PC-9 (cell line): ENCODE measurements at regions of chr19 and their contacts with region 1.

Region 1: GRCh38 chr19:32373585-32374295 is 28.3 kb downstream of the ZNF507 start:
- DNase-seq: peak; percentile 80 to 99
- H3K4me3 ChIP-seq: peak overlapping the region; percentile 12; the same call in 1 of the 2 replicates
- H3K27ac ChIP-seq: peak overlapping the region; percentile 79
- H3K4me1 ChIP-seq: peaks cover 39% of the 10 kb centered on the region
- H3K27me3 ChIP-seq: no peaks in the 10 kb centered on the region
- CTCF ChIP-seq: no peak

Region 2: GRCh38 chr19:32333227-32333626 is 40.5 kb before region 1 on chr19:
- CTCF ChIA-PET with region 1: no interaction called
- POLR2A ChIA-PET with region 1: no interaction called
- intact Hi-C with region 1: no loop called
- DNase-seq: no peak
- H3K4me3 ChIP-seq: no peak overlapping the region
- H3K27ac ChIP-seq: no peak overlapping the region
- H3K4me1 ChIP-seq: no peaks in the 10 kb centered on the region
- H3K27me3 ChIP-seq: peaks cover 16% of the 10 kb centered on the region
- CTCF ChIP-seq: no peak

Region 3: GRCh38 chr19:32345261-32346207 is 28.2 kb before region 1 on chr19 and contains the start of gene ZNF507:
- CTCF ChIA-PET with region 1: no interaction called
- POLR2A ChIA-PET with region 1: interaction called, 12 read pairs
- intact Hi-C with region 1: loop called (anchors 1 kb)
- DNase-seq: peak; percentile 49 to 81
- H3K4me3 ChIP-seq: peak within 1 kb of the TSS; percentile 98
- H3K27ac ChIP-seq: peak within 1 kb of the TSS; percentile 65
- H3K4me1 ChIP-seq: peaks cover 56% of the 10 kb centered on the region
- H3K27me3 ChIP-seq: no peaks in the 10 kb centered on the region
- CTCF ChIP-seq: no peak
- total RNA-seq, gene ZNF507: 20.8 and 26.5 TPM in 2 replicates

Region 4: DNA sequence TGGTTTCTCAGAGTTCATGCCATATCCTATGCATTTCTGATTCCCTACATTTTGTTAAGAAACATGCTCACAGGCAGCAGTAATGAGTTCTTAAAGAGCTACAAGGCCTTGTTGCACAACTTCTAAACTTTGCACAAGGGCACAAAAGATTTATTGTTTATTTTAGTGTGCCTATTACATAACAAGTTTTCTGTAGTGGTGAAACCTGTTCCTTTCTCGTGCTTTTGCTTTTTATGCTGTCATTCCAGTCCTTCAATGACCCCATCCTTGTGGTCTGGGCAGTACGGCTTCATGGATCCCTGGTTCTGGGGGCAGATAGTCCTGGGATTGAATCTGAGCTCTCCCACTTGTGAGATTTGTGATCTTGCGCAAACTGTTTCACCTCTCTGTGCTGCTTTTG is 10.5 kb before region 1 on chr19:
- CTCF ChIA-PET with region 1: no interaction called
- POLR2A ChIA-PET with region 1: no interaction called
- intact Hi-C with region 1: loop called (anchors 1 kb)
- DNase-seq: peak; percentile 34 to 91
- H3K4me3 ChIP-seq: no peak overlapping the region
- H3K27ac ChIP-seq: peak overlapping the region; percentile 27
- H3K4me1 ChIP-seq: peaks cover 28% of the 10 kb centered on the region
- H3K27me3 ChIP-seq: no peaks in the 10 kb centered on the region
- CTCF ChIP-seq: no peak

Region 5: DNA sequence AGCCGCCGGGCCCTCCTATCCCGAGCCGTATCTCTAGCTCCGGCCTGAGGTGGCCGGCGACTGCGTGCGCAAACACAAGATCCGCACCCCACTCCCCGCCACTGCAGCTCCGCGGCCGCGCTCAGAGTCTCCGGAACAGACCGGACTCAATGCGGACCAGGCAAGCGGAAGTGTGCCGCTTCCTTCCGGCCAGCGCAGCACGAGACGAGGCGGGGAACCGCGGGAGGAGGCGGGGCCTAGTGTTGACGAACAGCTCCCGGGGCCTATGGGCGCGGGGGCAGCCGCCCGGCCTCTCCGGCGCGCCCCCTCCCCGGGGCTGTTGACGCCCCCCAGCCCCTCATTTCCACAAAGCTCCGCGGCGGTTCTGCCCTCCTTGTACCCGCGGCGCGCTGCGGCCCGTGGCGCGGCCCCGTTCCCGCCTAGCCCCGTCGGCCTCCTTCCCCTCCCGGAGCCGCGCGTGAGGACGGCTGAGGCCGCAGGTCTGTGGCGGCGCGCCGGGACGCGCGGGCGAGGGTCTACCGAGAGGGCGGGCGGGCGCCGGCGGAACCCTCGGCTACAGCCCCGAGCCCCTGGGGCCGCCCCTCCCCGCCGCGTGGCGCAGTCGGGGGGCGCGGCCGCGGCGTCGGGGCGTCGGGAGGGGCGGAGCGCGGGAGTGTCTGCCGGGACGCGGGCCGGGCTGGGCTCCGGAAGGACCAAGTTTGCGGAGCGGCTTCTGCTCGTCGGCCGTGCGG is 31.9 kb after region 1 on chr19 and contains the start of gene DPY19L3:
- CTCF ChIA-PET with region 1: no interaction called
- POLR2A ChIA-PET with region 1: interaction called, 17 read pairs
- intact Hi-C with region 1: loop called (anchors 2 kb)
- DNase-seq: peak; percentile 79 to 94
- H3K4me3 ChIP-seq: peak within 1 kb of the TSS; percentile 93
- H3K27ac ChIP-seq: peak within 1 kb of the TSS; percentile 66
- H3K4me1 ChIP-seq: peaks cover 17% of the 10 kb centered on the region; the same call in 1 of the 2 replicates
- H3K27me3 ChIP-seq: no peaks in the 10 kb centered on the region
- CTCF ChIP-seq: no peak
- total RNA-seq, gene DPY19L3: 22.3 and 29.0 TPM in 2 replicates

Region 6: GRCh38 chr19:33292595-33293441 is 919.1 kb after region 1 on chr19:
- CTCF ChIA-PET with region 1: no interaction called
- POLR2A ChIA-PET with region 1: no interaction called
- intact Hi-C with region 1: loop called (anchors 10 kb)
- DNase-seq: no peak
- H3K4me3 ChIP-seq: no peak overlapping the region
- H3K27ac ChIP-seq: peak overlapping the region; percentile 82
- H3K4me1 ChIP-seq: peaks cover 52% of the 10 kb centered on the region
- H3K27me3 ChIP-seq: no peaks in the 10 kb centered on the region
- CTCF ChIP-seq: no peak